Esophagus muscularis mucosa (tissue), 4 donors: ENCODE measurements at regions of chr7 and their contacts with region 1.

Region 1: DNA sequence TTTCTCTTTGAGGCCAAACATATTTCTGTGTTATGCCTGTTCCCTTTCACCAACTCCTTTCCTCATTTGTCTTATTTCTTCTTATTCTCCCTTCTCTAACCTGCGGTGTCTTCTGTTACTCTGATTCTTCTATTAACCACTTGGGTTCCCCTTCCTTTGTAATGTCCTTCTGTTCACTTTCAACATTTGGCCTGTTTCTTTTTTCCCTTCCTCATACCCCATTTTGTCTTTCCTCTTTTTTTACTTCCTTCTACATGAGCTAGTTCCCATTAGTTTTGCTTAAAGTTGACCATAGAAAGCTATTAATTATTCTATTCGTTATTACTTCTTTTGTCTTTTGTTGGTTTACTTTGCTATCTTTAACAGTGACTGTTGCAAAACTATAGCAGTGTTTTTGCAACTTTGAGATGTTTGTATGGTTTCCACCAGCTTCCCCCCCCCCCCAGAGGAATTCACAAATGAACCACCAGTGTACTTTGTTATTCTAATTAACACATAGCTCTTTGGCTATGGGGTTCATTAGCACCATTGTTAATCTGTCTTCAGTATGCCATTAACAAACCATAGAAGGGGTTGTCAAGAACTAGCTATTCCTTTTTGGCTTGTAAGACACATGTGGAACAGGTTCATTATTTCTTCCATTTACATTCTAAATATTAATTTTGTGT is 2.9 kb downstream of the LRGUK start:
- DNase-seq: no peak
- H3K4me3 ChIP-seq: no peak overlapping the region
- H3K27ac ChIP-seq: no peak overlapping the region
- H3K4me1 ChIP-seq: peaks cover 12 to 19% (median 13%) of the 10 kb centered on the region in 4 donors
- H3K27me3 ChIP-seq: no peaks in the 10 kb centered on the region
- CTCF ChIP-seq: no peak
- EP300 ChIP-seq: no peak
- POLR2A ChIP-seq: no peak

Region 2: DNA sequence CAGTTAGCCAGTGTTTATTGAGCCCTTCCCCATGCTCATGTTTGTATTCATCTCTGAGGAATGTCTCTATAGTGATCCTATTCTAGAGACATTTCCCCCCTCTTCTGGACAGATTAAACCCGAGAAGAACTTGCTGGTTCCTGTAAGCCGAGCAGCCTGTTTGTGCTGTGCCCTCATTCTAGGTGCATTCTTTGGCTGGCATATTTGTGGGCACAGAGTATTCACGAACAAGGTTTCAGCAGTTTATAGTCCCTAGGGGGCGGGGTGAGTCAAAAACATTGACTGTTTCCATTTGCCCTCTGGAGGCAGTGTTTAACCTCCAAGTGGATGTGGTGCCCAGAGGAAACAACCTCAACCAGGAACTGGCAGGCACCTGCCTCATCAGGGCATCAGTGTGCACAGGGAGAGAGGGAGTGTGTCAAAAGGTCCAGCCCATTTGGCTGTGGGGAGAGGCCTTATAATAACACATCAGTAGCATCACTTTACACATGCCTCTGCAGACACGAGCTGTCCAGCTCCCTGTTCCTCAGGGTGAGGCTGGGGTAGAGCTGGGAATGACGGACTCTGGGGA is 276.2 kb before region 1 on chr7:
- intact Hi-C with region 1: no loop called
- DNase-seq: no peak
- H3K4me3 ChIP-seq: no peak overlapping the region
- H3K27ac ChIP-seq: no peak overlapping the region
- H3K4me1 ChIP-seq: peaks cover 3 to 10% (median 6%) of the 10 kb centered on the region in 4 donors
- H3K27me3 ChIP-seq: no peaks in the 10 kb centered on the region
- CTCF ChIP-seq: peak in 1 of 3 experiments; percentile 3
- EP300 ChIP-seq: no peak
- POLR2A ChIP-seq: no peak

Region 3: DNA sequence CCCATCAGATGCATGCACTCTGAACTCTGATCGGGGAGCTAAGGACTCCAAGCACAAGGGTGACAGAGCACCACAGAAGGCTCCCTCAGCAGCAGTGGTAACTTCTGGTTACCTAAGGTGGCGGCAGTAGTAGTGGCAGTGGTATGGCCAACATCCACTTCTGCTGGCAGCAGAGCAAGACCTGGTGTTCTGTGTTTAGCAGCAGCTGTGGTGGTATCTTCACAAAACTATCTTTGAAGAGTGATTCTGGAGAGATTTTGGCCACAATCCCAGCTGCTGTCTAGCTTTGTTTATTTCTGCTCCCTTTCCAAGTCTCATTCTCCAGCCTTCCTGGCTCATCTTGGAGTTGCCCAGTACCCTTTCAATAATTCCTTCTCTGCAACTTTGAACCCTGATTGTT is 105.3 kb before region 1 on chr7:
- intact Hi-C with region 1: no loop called
- DNase-seq: no peak
- H3K4me3 ChIP-seq: no peak overlapping the region
- H3K27ac ChIP-seq: no peak overlapping the region
- H3K4me1 ChIP-seq: peaks cover 0 to 23% (median 19%) of the 10 kb centered on the region in 4 donors
- H3K27me3 ChIP-seq: no peaks in the 10 kb centered on the region
- CTCF ChIP-seq: no peak
- EP300 ChIP-seq: no peak
- POLR2A ChIP-seq: no peak

Region 4: DNA sequence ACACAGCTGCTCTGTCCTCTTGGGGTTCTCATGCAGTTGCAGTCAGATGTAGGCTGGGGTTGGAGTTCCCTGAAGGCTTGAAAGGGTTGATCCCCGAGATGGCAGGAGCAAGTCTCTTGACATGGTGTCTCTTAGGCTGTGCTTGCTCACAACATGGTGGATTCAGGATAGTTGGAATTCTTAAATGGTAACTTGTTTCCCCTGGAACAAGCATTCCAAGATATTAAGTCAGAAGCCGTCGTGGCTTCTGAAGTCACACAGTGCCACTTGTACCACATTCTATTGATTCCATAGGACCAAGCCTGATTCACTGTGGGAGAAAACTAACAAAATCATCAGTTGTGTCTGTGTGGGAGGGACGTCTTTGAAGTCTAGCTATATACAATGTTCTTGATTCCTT is 190.2 kb after region 1 on chr7:
- intact Hi-C with region 1: loop called (anchors 5 kb)
- DNase-seq: peak; percentile 39
- H3K4me3 ChIP-seq: no peak overlapping the region
- H3K27ac ChIP-seq: no peak overlapping the region
- H3K4me1 ChIP-seq: peaks cover 5 to 16% (median 11%) of the 10 kb centered on the region in 4 donors
- H3K27me3 ChIP-seq: no peaks in the 10 kb centered on the region
- CTCF ChIP-seq: no peak
- EP300 ChIP-seq: no peak
- POLR2A ChIP-seq: no peak

Region 5: DNA sequence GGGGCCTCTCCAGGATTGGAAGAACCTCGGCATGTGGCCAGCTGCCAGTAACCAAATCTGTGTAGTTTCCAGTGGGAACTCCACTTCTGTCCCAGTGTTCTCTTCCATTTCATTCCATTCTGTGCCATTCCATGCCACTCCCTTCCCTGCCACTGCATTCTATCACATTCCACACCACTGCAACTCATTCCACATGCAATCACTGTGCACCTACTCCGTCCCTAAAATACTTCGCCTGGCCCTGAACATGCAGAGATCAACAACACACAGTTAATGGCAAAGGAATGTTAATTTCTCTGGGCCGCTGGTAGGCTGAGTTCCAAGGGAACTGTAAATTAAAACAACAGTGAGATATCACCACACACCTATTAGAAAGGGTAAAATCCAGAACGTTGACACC is 264.1 kb after region 1 on chr7:
- intact Hi-C with region 1: no loop called
- DNase-seq: no peak
- H3K4me3 ChIP-seq: no peak overlapping the region
- H3K27ac ChIP-seq: no peak overlapping the region
- H3K4me1 ChIP-seq: no peaks in the 10 kb centered on the region
- H3K27me3 ChIP-seq: peaks cover 0 to 4% (median 0%) of the 10 kb centered on the region in 4 donors
- CTCF ChIP-seq: no peak
- EP300 ChIP-seq: no peak
- POLR2A ChIP-seq: no peak